SK-N-SH (cell line): ENCODE measurements at regions of chr15 and their contacts with region 1.

Region 1: DNA sequence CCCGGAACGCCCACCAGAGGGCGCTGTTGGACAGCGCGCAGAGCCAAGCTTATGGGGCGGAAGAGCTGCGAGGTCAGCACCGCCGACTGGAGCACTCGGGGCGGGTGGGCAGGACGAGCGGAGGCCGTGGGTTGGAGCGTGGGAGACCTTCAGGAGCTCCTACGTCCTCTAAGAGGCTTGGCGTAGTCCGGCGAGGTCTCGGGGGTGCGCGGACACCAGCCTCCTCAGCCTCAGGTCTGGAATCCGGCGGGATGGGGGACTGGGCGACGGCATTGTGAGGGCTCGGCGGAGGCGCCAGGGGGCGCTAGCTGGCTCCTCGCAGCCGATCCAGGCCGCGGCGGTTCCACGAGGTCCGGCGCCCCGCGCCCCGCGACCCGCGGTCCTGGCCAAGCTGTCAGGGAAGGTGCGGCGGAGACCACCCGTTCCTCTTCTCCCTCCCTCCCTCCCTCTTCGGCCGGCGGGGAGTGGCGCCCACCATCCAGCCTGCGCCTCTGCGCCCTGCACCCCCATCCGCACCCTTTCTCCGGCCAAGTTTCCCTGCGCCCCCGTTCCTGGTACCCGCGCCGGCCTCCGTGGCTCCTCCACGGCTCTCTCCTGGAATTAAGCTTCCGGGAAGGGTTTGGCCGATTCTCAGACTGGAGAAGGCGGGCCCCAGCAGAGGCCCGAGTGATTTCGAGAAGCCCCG is 24.3 kb upstream of the POLG start:
- DNase-seq: peak; percentile 94
- H3K4me3 ChIP-seq: peak overlapping the region; percentile 54 to 81
- H3K27ac ChIP-seq: peak overlapping the region in 1 of 2 experiments; percentile 77; a peak in 1 of 4 replicates
- H3K4me1 ChIP-seq: peaks cover 0 to 35% of the 10 kb centered on the region in 2 experiments; a peak in 2 of 4 replicates
- H3K27me3 ChIP-seq: peaks cover 39% of the 10 kb centered on the region; the same call in 1 of the 2 replicates
- CTCF ChIP-seq: peak; percentile 92
- EP300 ChIP-seq: no peak
- RAD21 ChIP-seq: peak; percentile 87

Region 2: GRCh38 chr15:89243691-89244471 is 115.0 kb before region 1 on chr15 and contains the start of gene FANCI:
- CTCF ChIA-PET with region 1: interaction called, 12 read pairs
- POLR2A ChIA-PET with region 1: no interaction called
- DNase-seq: peak; percentile 96
- H3K4me3 ChIP-seq: peak within 1 kb of the TSS; percentile 68 to 89
- H3K27ac ChIP-seq: peak within 1 kb of the TSS; percentile 43 to 72; a peak in 3 of 4 replicates
- H3K4me1 ChIP-seq: peaks cover 4 to 10% of the 10 kb centered on the region in 2 experiments; a peak in 3 of 4 replicates
- H3K27me3 ChIP-seq: no peaks in the 10 kb centered on the region
- CTCF ChIP-seq: peak; percentile 57
- EP300 ChIP-seq: no peak; a peak in 1 of 4 replicates
- RAD21 ChIP-seq: peak; percentile 60
- polyA plus RNA-seq, gene FANCI: 13.2 and 15.4 TPM in 2 replicates

Region 3: DNA sequence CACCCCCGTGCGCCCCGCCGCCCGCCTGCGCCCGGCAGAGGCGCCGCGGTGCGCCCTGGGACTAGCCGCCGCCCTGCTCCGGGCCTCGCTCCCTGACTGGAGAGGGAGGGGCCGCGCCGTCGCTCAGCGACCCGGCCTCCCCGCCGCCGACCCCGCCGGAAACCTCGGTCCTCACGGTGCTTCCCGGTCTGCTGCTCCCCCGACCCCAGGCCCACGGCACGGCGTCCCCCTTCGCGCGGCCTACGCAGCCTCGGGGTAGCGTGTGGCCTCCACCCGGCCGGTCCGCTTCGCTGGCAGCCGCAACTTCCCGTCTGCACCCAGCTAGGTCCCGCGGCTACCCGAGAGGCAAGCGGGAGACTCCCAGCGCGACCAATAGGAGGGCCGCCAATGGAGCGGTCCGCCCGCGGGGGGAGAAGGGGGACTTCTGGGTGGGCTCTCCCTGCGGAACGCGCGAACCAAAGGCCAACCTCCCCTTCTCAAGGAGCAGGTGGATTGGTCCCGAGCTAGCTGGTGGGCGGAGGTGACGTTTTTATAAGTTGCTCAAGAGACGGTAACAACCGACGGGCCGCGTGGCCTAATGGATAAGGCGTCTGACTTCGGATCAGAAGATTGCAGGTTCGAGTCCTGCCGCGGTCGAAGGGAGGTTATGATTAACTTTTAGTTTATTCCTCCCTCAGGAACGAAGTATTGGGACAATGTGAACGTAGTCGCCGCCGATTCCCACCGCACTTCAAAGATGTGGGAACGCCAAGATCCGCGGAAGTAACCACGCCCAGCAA is 24.2 kb before region 1 on chr15 and contains the start of gene POLG:
- CTCF ChIA-PET with region 1: interaction called, 95 read pairs
- POLR2A ChIA-PET with region 1: interaction called, 6 read pairs
- DNase-seq: peak; percentile 97
- H3K4me3 ChIP-seq: peak within 1 kb of the TSS; percentile 80 to 87
- H3K27ac ChIP-seq: peak within 1 kb of the TSS; percentile 76 to 95
- H3K4me1 ChIP-seq: peaks cover 18 to 44% of the 10 kb centered on the region in 2 experiments
- H3K27me3 ChIP-seq: no peaks in the 10 kb centered on the region
- CTCF ChIP-seq: no peak
- EP300 ChIP-seq: peak; percentile 37 to 69; a peak in 2 of 4 replicates
- RAD21 ChIP-seq: no peak
- polyA plus RNA-seq, gene POLG: 24.9 and 25.1 TPM in 2 replicates

Region 4: DNA sequence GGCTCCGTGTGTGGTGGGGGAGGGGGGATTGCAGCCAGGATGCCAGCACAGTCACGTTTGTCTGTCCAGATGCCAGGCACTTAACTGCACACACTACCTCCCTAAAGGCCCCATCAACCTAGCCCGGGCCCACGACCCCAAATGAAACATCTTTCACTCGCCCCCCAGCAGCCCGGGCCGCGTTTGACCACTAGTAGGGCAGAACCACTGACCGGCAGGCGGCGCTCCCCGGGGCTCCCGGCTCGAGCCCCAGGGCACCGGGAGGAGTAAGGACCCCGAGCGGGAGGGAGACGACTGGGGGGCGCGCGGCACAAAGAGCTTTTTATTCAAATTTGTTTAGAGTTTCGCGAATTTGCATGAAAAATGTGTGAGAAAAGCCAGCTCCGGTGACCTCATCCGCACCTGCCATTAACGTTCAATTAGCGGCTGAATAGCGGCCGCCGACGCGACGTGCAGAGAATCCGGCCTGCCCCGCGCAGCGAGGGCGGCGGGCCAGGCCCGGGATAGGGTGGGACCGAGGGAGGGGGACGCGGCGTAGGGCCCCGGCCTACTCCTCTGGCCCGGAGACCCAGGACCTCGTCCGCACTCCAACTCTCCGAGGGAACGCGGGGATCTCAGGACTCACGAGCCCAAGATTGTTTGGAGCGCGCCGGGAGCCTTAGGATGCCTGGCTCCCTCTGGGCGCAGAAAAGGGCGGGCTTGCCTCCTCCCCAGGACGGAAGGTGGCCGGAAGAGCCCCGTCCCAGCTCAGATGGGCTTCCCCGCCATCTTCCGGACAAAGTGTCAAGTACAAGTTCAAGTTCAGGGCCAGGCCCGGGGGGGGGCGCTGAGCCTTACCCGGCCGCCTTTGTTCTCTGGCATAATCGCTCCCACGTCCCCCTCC is 40.6 kb after region 1 on chr15:
- CTCF ChIA-PET with region 1: interaction called, 766 read pairs
- POLR2A ChIA-PET with region 1: interaction called, 19 read pairs
- DNase-seq: peak; percentile 92
- H3K4me3 ChIP-seq: peak overlapping the region; percentile 70 to 72
- H3K27ac ChIP-seq: peak overlapping the region; percentile 59 to 94
- H3K4me1 ChIP-seq: peaks cover 0 to 22% of the 10 kb centered on the region in 2 experiments; a peak in 2 of 4 replicates
- H3K27me3 ChIP-seq: no peaks in the 10 kb centered on the region
- CTCF ChIP-seq: peak; percentile 72
- EP300 ChIP-seq: no peak
- RAD21 ChIP-seq: peak; percentile 69

Region 5: DNA sequence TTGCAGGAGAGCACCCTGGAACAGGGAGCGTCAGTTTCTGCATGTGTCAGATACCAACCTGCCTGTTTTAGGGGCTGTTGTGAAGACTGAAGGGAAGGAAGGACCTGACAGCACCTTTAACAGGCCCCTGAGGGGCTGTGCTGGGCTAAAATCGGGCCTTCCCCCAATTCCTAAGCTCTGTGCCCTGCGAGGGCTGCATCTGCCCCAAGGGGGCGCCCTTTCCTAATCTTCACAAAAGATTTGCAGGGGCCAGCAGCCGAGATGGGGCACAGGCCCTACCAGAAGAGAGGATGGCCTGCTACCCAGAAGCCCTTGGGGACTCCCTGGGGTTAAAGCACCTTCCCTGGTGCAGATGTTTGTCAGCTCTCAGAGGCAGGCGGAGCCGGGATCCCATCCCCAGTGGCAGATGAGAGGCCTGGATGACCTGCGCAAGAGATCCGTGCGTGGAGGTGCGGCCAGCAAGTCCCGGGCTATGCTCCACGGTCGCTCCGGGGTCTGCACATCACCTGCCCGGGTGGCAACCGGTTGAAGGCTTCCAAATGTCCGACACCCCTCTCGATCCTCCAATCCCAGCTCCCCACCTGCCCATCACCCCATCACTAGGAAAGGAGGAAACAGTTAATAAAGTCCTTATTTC is 83.9 kb after region 1 on chr15:
- CTCF ChIA-PET with region 1: interaction called, 446 read pairs
- POLR2A ChIA-PET with region 1: no interaction called
- DNase-seq: peak; percentile 88
- H3K4me3 ChIP-seq: peak overlapping the region in 1 of 2 experiments; percentile 17; a peak in 1 of 4 replicates
- H3K27ac ChIP-seq: no peak overlapping the region
- H3K4me1 ChIP-seq: peaks cover 0 to 43% of the 10 kb centered on the region in 2 experiments; a peak in 1 of 4 replicates
- H3K27me3 ChIP-seq: no peaks in the 10 kb centered on the region
- CTCF ChIP-seq: peak; percentile 84
- EP300 ChIP-seq: no peak
- RAD21 ChIP-seq: peak; percentile 82

Region 6: GRCh38 chr15:89472785-89473256 is 113.9 kb after region 1 on chr15:
- CTCF ChIA-PET with region 1: interaction called, 305 read pairs
- POLR2A ChIA-PET with region 1: interaction called, 3 read pairs
- DNase-seq: peak; percentile 91
- H3K4me3 ChIP-seq: no peak overlapping the region; a peak in 1 of 4 replicates
- H3K27ac ChIP-seq: no peak overlapping the region
- H3K4me1 ChIP-seq: peaks cover 2 to 5% of the 10 kb centered on the region in 2 experiments; a peak in 2 of 4 replicates
- H3K27me3 ChIP-seq: no peaks in the 10 kb centered on the region
- CTCF ChIP-seq: peak; percentile 85
- EP300 ChIP-seq: no peak
- RAD21 ChIP-seq: peak; percentile 96

Region 7: DNA sequence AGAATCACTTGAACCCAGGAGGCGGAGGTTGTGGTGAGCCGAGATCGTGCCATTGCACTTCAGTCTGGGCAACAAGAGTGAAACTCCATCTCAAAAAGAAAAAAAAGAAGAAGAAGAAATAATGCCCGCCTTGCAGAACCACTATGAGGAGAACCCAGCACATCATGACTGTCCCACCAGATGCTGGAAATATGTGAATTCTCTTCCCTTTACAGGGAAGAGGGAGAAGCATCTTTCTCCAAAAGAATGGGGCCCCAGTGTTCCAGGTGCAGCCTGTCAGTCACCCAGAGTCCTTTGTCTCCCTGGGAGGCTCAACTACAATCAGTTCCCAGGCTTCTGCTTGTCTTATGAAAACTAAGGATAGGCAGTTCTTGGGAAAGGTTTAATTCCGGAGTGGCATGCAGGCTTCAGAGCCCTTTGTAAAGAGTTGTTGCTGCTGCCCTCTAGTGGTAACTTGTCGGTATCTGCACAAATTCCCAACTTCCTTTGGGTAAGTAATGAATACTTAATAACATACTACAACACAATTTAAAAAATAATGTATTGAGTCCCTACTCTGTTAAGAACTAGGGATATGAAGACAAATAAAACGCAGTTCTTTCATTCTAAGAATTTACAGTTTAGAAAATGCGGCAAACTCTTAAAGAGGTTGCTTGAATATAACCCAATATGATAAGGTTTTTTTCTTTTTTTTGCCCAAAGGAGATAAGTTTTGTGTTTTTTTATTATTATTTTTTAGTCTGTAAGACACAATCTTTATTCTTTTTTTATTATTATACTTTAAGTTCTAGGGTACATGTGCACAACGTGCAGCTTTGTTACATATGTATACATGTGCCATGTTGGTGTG is 197.7 kb after region 1 on chr15:
- CTCF ChIA-PET with region 1: interaction called, 19 read pairs
- POLR2A ChIA-PET with region 1: no interaction called
- DNase-seq: peak; percentile 70
- H3K4me3 ChIP-seq: no peak overlapping the region
- H3K27ac ChIP-seq: no peak overlapping the region
- H3K4me1 ChIP-seq: no peaks in the 10 kb centered on the region
- H3K27me3 ChIP-seq: peaks cover 10% of the 10 kb centered on the region; the same call in 1 of the 2 replicates
- CTCF ChIP-seq: peak; percentile 85
- EP300 ChIP-seq: no peak
- RAD21 ChIP-seq: peak; percentile 74